ENCODE measurements at regions of chr3 and their contacts with region 1.

Region 1: GRCh38 chr3:112043603-112044201 is 9.2 kb downstream of the TMPRSS7 start:
- DNase-seq: peak; percentile 69
- ATAC-seq: peak; percentile 96
- H3K4me3 Mint-ChIP-seq: no peak overlapping the region
- H3K27ac Mint-ChIP-seq: no peak overlapping the region
- H3K4me1 Mint-ChIP-seq: peaks cover 4% of the 10 kb centered on the region
- H3K27me3 Mint-ChIP-seq: no peaks in the 10 kb centered on the region

Region 2: GRCh38 chr3:111989061-111989678 is 54.5 kb before region 1 on chr3:
- CTCF ChIA-PET with region 1: interaction called, 18 read pairs
- POLR2A ChIA-PET with region 1: no interaction called
- intact Hi-C with region 1: loop called (anchors 1 kb)
- DNase-seq: no peak
- ATAC-seq: peak; percentile 69
- H3K4me3 Mint-ChIP-seq: no peak overlapping the region
- H3K27ac Mint-ChIP-seq: no peak overlapping the region
- H3K4me1 Mint-ChIP-seq: peaks cover 36% of the 10 kb centered on the region
- H3K27me3 Mint-ChIP-seq: no peaks in the 10 kb centered on the region

Measured in activated CD4-positive, alpha-beta T cell treated with anti-CD3 and anti-CD28 coated beads for 36 hours (primary cell).